HEK293T (cell line): ENCODE measurements at regions of chr17 and their contacts with region 1.

Region 1: DNA sequence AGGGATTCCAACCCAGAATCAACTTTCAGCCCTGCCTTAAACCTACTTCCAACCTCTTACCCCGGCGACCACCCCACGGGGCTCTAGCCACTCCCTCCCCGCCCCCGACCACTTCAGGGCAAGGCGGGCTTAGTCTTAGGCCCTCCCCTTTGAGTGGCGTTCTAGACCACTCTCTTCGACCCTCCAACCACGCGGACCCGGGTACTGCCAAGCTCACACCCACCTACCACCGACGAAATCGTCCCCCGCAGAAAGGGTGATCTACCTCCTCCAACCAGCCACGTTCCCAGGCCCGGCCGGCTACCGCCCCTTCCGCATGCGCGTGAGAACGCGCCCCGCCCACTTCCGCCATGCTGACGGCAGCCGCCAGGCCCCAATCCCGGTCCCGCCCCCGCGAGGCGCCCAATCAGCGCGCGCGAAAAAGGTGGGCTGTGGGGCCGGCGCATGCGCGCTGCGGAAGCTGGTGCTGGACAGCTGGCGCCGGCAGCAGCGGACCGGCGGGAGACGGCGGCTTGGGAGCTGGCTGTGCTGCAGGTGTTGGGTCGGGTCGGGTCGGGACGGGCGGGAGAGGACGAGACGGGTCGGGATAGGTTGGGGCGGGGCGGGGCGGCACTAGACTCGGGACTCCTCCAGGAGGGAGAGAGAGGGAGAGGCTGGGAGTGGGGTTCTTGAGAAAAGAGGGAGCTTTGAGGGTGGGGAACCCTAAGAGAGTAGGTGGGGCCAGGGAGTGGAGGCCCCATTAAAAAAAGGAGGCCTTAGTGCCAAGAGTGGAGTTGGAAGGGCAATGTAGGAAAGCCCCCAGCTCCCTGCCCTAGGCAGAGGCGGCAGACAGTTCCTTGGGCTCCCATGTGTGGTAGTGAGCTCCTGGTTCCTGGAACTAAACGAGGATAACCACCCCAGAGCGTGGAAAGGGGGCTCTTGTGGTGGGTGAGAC is at the start of gene NAT9:
- DNase-seq: peak; percentile 100

Region 2: DNA sequence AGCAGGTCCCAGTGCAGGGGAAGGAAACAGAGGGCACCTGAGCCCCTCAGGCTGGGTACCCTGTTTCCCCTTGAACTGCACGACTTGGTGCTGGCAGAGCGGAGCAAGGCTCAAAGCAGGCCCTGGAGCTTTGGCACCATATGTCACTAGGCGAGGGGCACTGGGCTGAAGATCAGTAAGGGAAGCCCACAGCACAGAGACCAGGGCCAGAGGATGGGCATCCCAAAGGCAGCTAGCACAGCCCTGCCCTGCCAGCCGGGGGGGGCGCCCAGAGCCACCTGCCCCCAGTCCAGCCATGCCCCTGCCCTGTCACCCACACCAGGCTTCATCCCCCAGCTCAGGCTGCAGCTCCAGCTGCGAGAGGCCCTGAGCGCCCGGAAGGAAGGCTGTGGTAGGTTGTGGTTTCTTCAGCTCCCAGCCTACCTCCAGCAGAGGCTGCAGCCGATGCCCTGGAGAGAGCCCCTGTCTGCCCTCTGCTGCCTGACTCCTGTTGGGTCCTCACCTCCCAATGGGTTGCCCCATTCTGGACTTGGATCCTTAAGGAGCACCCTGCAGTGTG is 17.0 kb before region 1 on chr17:
- CTCF ChIA-PET with region 1: interaction called, 6 read pairs
- POLR2A ChIA-PET with region 1: interaction called, 10 read pairs
- DNase-seq: no peak